ENCODE measurements at regions of chr17 and their contacts with region 1.

Region 1: GRCh38 chr17:76557368-76558197 is 17.7 kb downstream of the PRCD start:
- DNase-seq: peak; percentile 87
- ATAC-seq: peak; percentile 90
- H3K4me3 Mint-ChIP-seq: peak overlapping the region; percentile 95
- H3K27ac Mint-ChIP-seq: peak overlapping the region; percentile 98
- H3K4me1 Mint-ChIP-seq: peaks cover 68% of the 10 kb centered on the region
- H3K27me3 Mint-ChIP-seq: no peaks in the 10 kb centered on the region
- CTCF ChIP-seq: no peak

Region 2: GRCh38 chr17:76384222-76384986 is 173.2 kb before region 1 on chr17 and contains the start of gene SPHK1:
- CTCF ChIA-PET with region 1: no interaction called
- POLR2A ChIA-PET with region 1: no interaction called
- intact Hi-C with region 1: loop called (anchors 1 kb)
- DNase-seq: peak; percentile 77
- ATAC-seq: peak; percentile 75
- H3K4me3 Mint-ChIP-seq: peak within 1 kb of the TSS; percentile 86
- H3K27ac Mint-ChIP-seq: peak within 1 kb of the TSS; percentile 71
- H3K4me1 Mint-ChIP-seq: peaks cover 15% of the 10 kb centered on the region
- H3K27me3 Mint-ChIP-seq: peaks cover 2% of the 10 kb centered on the region
- CTCF ChIP-seq: no peak
- total RNA-seq, gene SPHK1: 1.1 and 1.3 TPM in 2 replicates

Region 3: DNA sequence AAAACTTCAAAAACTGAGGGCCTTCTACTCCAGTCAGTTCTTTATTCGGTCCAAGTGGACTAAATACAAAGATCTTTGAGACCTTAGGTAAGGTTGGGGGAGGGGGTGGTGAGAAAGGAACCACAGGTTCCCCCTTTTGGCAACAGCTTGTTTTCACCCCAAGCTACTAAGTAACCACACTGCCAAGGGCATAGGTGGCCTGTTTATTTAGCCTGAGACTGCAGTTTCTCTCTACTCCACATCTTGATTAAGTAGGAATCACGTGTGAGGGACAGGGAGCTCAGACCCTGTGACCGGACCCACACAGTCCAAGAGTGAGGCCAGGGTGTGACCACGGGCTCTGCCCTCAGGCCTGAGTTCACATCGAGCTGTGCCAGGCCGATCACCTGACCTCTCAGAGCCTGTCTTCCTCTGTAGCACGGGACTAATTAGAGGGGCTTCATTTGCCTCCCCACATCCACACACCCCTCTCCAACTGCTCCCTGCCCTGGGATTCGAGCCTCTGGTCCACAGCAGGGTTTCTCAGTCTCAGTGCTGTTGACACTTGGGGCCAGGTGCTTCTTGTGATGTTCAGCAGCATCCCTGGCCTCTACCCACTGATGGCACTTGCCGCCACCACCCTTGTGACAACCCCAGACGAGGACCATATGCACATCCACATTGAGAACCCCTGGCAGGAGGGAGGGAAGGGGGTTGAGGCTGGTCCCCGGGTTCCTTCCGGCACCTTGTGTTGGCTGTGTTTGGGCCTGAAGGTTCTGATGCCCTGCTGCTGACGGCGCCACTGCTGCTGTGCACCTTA is 10.2 kb after region 1 on chr17:
- CTCF ChIA-PET with region 1: interaction called, 14 read pairs
- POLR2A ChIA-PET with region 1: interaction called, 18 read pairs
- intact Hi-C with region 1: no loop called
- DNase-seq: no peak
- ATAC-seq: peak; percentile 60
- H3K4me3 Mint-ChIP-seq: peak overlapping the region; percentile 15
- H3K27ac Mint-ChIP-seq: no peak overlapping the region
- H3K4me1 Mint-ChIP-seq: peaks cover 30% of the 10 kb centered on the region
- H3K27me3 Mint-ChIP-seq: no peaks in the 10 kb centered on the region
- CTCF ChIP-seq: no peak

Region 4: GRCh38 chr17:76578344-76578979 is 20.9 kb after region 1 on chr17:
- CTCF ChIA-PET with region 1: no interaction called
- POLR2A ChIA-PET with region 1: no interaction called
- intact Hi-C with region 1: no loop called
- DNase-seq: no peak
- ATAC-seq: no peak
- H3K4me3 Mint-ChIP-seq: no peak overlapping the region
- H3K27ac Mint-ChIP-seq: no peak overlapping the region
- H3K4me1 Mint-ChIP-seq: peaks cover 4% of the 10 kb centered on the region
- H3K27me3 Mint-ChIP-seq: peaks cover 5% of the 10 kb centered on the region
- CTCF ChIP-seq: no peak

Region 5: GRCh38 chr17:76602880-76603279 is 45.3 kb after region 1 on chr17:
- CTCF ChIA-PET with region 1: no interaction called
- POLR2A ChIA-PET with region 1: no interaction called
- intact Hi-C with region 1: no loop called
- DNase-seq: no peak
- ATAC-seq: no peak
- H3K4me3 Mint-ChIP-seq: no peak overlapping the region
- H3K27ac Mint-ChIP-seq: no peak overlapping the region
- H3K4me1 Mint-ChIP-seq: no peaks in the 10 kb centered on the region
- H3K27me3 Mint-ChIP-seq: peaks cover 31% of the 10 kb centered on the region
- CTCF ChIP-seq: no peak

Region 6: GRCh38 chr17:76623271-76624146 is 65.9 kb after region 1 on chr17:
- CTCF ChIA-PET with region 1: interaction called, 35 read pairs
- POLR2A ChIA-PET with region 1: interaction called, 16 read pairs
- intact Hi-C with region 1: loop called (anchors 1 kb)
- DNase-seq: peak; percentile 68
- ATAC-seq: peak; percentile 98
- H3K4me3 Mint-ChIP-seq: no peak overlapping the region
- H3K27ac Mint-ChIP-seq: no peak overlapping the region
- H3K4me1 Mint-ChIP-seq: no peaks in the 10 kb centered on the region
- H3K27me3 Mint-ChIP-seq: peaks cover 15% of the 10 kb centered on the region
- CTCF ChIP-seq: peak; percentile 78

Region 7: GRCh38 chr17:76714822-76715495 is 157.4 kb after region 1 on chr17:
- CTCF ChIA-PET with region 1: interaction called, 6 read pairs
- POLR2A ChIA-PET with region 1: interaction called, 3 read pairs
- intact Hi-C with region 1: loop called (anchors 1 kb)
- DNase-seq: peak; percentile 56
- ATAC-seq: peak; percentile 29
- H3K4me3 Mint-ChIP-seq: peak overlapping the region; percentile 39
- H3K27ac Mint-ChIP-seq: peak overlapping the region; percentile 78
- H3K4me1 Mint-ChIP-seq: peaks cover 27% of the 10 kb centered on the region
- H3K27me3 Mint-ChIP-seq: no peaks in the 10 kb centered on the region
- CTCF ChIP-seq: peak; percentile 76